ENCODE measurements at regions of chr10 and their contacts with region 1.

Region 1: DNA sequence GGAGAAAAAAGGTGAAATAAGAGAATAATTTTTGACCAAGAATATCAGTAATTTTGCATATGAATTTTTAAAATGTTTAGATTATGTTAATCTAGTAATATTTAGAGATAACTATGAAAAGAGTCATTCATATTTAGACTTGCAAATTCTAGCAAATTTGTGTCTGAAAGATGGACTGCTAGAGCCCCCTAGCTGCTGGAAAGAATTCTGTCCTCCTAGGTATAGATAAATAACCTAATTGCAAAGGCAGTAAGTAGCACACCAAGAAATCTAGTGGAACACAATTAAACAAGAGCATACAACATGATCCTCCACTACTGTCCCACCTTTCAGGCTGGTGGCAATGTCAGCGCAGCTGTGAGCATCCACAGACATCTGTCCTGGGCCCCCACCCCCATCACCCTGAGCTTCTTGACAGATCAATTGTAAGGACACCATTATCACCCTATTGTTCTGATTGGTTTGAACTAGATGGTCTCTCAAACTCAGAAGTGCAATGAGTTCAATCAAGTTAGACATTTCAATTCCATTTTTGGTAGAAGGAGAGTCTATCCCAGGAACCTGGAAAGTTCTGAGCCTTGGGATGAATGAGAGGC is 15.0 kb upstream of the GFRA1 start:
- DNase-seq: no peak
- H3K4me3 ChIP-seq: no peak overlapping the region
- H3K27ac ChIP-seq: no peak overlapping the region
- H3K4me1 ChIP-seq: no peaks in the 10 kb centered on the region
- H3K27me3 ChIP-seq: peaks cover 0 to 6% (median 0%) of the 10 kb centered on the region in 4 donors
- CTCF ChIP-seq: peak; percentile 49 to 60 (median 59)
- EP300 ChIP-seq: no peak
- POLR2A ChIP-seq: no peak

Region 2: DNA sequence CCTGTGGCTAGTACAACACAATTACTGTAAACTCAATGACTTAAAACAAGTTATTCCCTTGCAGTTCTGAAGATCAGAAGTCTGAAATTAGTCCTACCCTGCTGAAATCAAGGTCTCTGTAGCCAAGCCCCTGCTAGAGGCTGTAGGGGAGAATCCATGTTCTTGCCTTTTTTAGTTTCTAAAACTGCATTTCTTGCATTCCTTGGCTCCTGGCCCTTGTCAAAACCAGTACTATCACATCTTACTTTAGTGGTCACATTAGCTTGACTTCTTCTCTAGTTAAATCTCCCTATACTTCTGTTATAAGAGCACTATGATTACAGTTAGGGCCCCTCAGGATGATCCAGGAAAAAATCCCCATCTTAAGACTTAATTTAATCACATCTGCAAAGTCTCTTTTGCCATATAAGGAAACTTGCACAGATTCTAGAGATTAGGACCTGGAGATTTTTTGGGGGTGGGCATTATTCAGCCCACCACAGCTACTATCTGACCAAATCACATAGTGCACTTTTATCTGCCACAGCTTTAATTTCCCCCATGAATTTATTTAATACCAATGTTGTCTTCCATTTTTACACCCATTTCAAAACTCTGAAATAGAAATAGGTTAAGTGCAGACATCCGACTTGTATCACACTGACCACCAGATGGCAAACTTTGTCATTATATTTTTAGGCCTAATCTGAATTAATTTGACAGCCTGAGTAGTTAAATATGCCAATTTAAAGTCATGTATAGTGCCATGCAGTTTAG is 581.8 kb before region 1 on chr10:
- intact Hi-C with region 1: loop called (anchors 10 kb)
- DNase-seq: no peak
- H3K4me3 ChIP-seq: no peak overlapping the region
- H3K27ac ChIP-seq: no peak overlapping the region
- H3K4me1 ChIP-seq: no peaks in the 10 kb centered on the region
- H3K27me3 ChIP-seq: no peaks in the 10 kb centered on the region
- CTCF ChIP-seq: peak in 2 of 3 experiments; percentile 41 to 44
- EP300 ChIP-seq: no peak
- POLR2A ChIP-seq: no peak

Region 3: DNA sequence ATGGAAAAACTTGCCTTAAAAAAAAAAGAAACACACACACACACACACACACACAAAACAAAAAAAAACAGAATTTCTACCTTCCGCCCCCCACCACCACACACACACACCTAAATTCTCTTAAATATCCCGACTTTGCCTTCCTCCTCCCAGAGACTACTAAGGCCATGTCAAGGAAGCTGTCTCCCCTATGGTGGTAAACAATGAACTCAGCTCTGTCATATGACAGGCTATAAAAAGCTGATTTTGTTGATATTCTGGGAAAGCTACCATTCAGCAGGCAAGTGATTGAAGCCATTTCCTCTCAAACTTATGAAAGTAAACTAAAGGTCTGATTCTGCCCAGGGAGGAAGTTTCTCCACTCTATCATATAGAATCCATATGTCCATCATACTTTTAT is 486.0 kb before region 1 on chr10:
- intact Hi-C with region 1: loop called (anchors 5 kb)
- DNase-seq: no peak
- H3K4me3 ChIP-seq: no peak overlapping the region
- H3K27ac ChIP-seq: no peak overlapping the region
- H3K4me1 ChIP-seq: no peaks in the 10 kb centered on the region
- H3K27me3 ChIP-seq: no peaks in the 10 kb centered on the region
- CTCF ChIP-seq: no peak
- EP300 ChIP-seq: no peak
- POLR2A ChIP-seq: no peak

Region 4: GRCh38 chr10:116211682-116212081 is 76.3 kb before region 1 on chr10:
- intact Hi-C with region 1: no loop called
- DNase-seq: no peak
- H3K4me3 ChIP-seq: no peak overlapping the region
- H3K27ac ChIP-seq: no peak overlapping the region
- H3K4me1 ChIP-seq: peaks cover 0 to 13% (median 4%) of the 10 kb centered on the region in 4 donors
- H3K27me3 ChIP-seq: no peaks in the 10 kb centered on the region
- CTCF ChIP-seq: no peak
- EP300 ChIP-seq: no peak
- POLR2A ChIP-seq: no peak